Activated CD8-positive, alpha-beta memory T cell treated with anti-CD3 and anti-CD28 coated beads, Interleukin-2, amount 10 ng/mL, durations not matched to agents 7 days and 5 days (primary cell): ENCODE measurements at regions of chr1 and their contacts with region 1.

Region 1: GRCh38 chr1:23634842-23635651 is 56.6 kb upstream of the RPL11 start:
- DNase-seq: peak; percentile 78
- ATAC-seq: peak; percentile 87
- H3K4me3 Mint-ChIP-seq: peak overlapping the region; percentile 48
- H3K27ac Mint-ChIP-seq: peak overlapping the region; percentile 54
- H3K4me1 Mint-ChIP-seq: peaks cover 19% of the 10 kb centered on the region
- H3K27me3 Mint-ChIP-seq: no peaks in the 10 kb centered on the region

Region 2: GRCh38 chr1:23337869-23338268 is 297.2 kb before region 1 on chr1:
- CTCF ChIA-PET with region 1: no interaction called
- DNase-seq: no peak
- ATAC-seq: no peak
- H3K4me3 Mint-ChIP-seq: no peak overlapping the region
- H3K27ac Mint-ChIP-seq: no peak overlapping the region
- H3K4me1 Mint-ChIP-seq: peaks cover 47% of the 10 kb centered on the region
- H3K27me3 Mint-ChIP-seq: no peaks in the 10 kb centered on the region

Region 3: GRCh38 chr1:23484253-23485001 is 150.6 kb before region 1 on chr1:
- CTCF ChIA-PET with region 1: interaction called, 17 read pairs
- DNase-seq: peak; percentile 93
- ATAC-seq: peak; percentile 91
- H3K4me3 Mint-ChIP-seq: peak overlapping the region; percentile 76
- H3K27ac Mint-ChIP-seq: peak overlapping the region; percentile 46
- H3K4me1 Mint-ChIP-seq: peaks cover 15% of the 10 kb centered on the region
- H3K27me3 Mint-ChIP-seq: peaks cover 66% of the 10 kb centered on the region

Region 4: DNA sequence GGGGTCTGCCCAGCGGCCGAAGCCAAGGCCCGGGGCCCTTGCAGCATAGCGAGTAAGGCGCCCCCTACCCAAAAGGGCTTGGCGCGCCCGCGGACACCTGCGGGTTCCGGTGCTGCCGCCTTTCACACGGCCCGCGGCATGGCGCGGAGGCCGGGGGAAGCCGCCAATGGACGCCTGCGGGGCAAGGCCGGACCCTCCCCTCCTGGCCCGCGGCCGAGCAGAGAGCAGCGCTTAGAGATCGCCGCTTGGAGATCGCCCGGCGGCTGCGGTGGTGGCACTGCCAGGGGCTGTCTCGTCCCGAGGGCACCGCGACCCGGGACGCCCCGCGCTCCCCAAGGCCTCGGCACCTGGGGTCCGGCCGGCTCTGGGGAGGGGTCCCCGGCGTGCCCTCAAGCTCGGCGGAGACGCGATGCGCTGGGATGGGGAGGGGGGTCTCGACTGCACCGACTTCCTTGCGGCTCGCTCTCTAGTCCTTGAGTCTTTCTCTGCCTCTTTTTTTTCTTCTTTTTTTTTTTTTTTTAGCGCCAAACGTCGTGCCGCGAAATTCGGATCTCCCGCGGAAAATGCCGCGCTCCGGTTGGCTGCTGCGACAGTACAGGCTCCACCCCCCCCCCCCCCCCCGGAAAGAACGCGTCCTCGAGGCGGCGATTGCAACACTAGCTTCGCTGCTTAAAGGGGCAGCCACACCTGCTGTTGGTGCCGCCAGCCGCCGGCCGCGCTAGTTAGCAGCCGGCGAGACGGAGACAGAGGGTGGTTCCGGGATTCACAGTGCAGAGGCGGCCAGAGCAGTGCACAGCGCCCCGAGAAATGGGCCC is 104.1 kb before region 1 on chr1 and contains the start of gene E2F2:
- CTCF ChIA-PET with region 1: interaction called, 73 read pairs
- DNase-seq: peak; percentile 92
- ATAC-seq: peak; percentile 73
- H3K4me3 Mint-ChIP-seq: peak within 1 kb of the TSS; percentile 91
- H3K27ac Mint-ChIP-seq: peak within 1 kb of the TSS; percentile 94
- H3K4me1 Mint-ChIP-seq: peaks cover 69% of the 10 kb centered on the region
- H3K27me3 Mint-ChIP-seq: peaks cover 3% of the 10 kb centered on the region
- total RNA-seq, gene E2F2: 77.4 to 103 TPM

Region 5: GRCh38 chr1:23591460-23592208 is 43.4 kb before region 1 on chr1:
- CTCF ChIA-PET with region 1: interaction called, 16 read pairs
- DNase-seq: peak; percentile 76
- ATAC-seq: peak; percentile 76
- H3K4me3 Mint-ChIP-seq: peak overlapping the region; percentile 14
- H3K27ac Mint-ChIP-seq: peak overlapping the region; percentile 76
- H3K4me1 Mint-ChIP-seq: peaks cover 47% of the 10 kb centered on the region
- H3K27me3 Mint-ChIP-seq: peaks cover 2% of the 10 kb centered on the region

Region 6: DNA sequence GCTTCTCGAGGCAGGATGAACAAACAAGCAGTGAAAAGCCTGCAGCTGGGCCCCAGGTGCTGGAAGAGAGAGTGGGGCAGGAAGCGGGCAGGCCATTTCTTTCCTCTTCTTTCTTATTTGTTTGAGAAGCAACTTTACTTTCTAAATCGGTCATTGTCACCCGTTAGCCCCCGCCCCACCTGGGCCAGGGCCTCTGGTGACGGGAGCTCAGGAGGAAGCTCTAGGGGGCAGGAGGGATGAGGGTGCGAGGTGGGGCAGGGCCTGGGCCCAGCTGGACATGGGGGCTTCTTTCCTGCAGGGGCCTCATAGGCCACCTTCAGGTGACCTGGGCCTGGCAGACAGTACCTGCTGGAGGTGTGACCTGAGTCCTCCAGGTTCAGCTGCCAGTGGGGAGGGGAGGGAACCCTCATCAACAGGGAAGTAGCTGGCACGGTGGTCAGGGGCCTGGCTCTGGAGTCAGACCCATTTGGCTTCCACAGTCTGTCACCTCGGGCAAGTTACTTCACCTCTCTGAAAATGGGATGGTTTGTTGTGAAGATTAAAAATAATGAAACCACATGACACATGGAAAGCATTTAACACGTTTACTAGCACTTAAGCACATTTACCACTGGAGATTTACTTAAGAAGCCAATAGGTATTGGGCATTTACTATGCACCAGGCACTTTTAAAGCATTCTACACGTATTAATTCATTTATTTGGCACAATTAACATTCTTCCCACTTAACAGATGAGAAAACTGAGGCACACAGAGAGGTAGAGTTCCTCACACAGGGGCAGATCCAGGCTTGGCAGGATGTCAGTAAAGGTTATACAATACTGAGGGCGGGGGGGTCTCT is 21.6 kb before region 1 on chr1:
- CTCF ChIA-PET with region 1: interaction called, 114 read pairs
- DNase-seq: peak; percentile 81
- ATAC-seq: peak; percentile 79
- H3K4me3 Mint-ChIP-seq: no peak overlapping the region
- H3K27ac Mint-ChIP-seq: peak overlapping the region; percentile 85
- H3K4me1 Mint-ChIP-seq: peaks cover 36% of the 10 kb centered on the region
- H3K27me3 Mint-ChIP-seq: peaks cover under 1% of the 10 kb centered on the region

Region 7: GRCh38 chr1:23691499-23692307 is 56.7 kb after region 1 on chr1 and contains the start of gene RPL11:
- CTCF ChIA-PET with region 1: interaction called, 10 read pairs
- DNase-seq: peak; percentile 92
- ATAC-seq: peak; percentile 96
- H3K4me3 Mint-ChIP-seq: peak within 1 kb of the TSS; percentile 98
- H3K27ac Mint-ChIP-seq: peak within 1 kb of the TSS; percentile 92
- H3K4me1 Mint-ChIP-seq: peaks cover 47% of the 10 kb centered on the region
- H3K27me3 Mint-ChIP-seq: no peaks in the 10 kb centered on the region
- total RNA-seq, gene RPL11: 844 to 1,001 TPM

Region 8: GRCh38 chr1:23751050-23751814 is 116.2 kb after region 1 on chr1:
- CTCF ChIA-PET with region 1: no interaction called
- DNase-seq: peak; percentile 56
- ATAC-seq: peak; percentile 78
- H3K4me3 Mint-ChIP-seq: no peak overlapping the region
- H3K27ac Mint-ChIP-seq: peak overlapping the region; percentile 58
- H3K4me1 Mint-ChIP-seq: peaks cover 31% of the 10 kb centered on the region
- H3K27me3 Mint-ChIP-seq: no peaks in the 10 kb centered on the region

Region 9: GRCh38 chr1:23763041-23763577 is 128.1 kb after region 1 on chr1:
- CTCF ChIA-PET with region 1: no interaction called
- DNase-seq: no peak
- ATAC-seq: no peak
- H3K4me3 Mint-ChIP-seq: no peak overlapping the region
- H3K27ac Mint-ChIP-seq: no peak overlapping the region
- H3K4me1 Mint-ChIP-seq: no peaks in the 10 kb centered on the region
- H3K27me3 Mint-ChIP-seq: no peaks in the 10 kb centered on the region